ENCODE measurements at regions of chr2 and their contacts with region 1.

Region 1: GRCh38 chr2:205772983-205773382 is 90.7 kb downstream of the NRP2 start:
- DNase-seq: no peak
- CTCF ChIP-seq: no peak

Region 2: GRCh38 chr2:205130111-205130829 is 642.7 kb before region 1 on chr2:
- in situ Hi-C with region 1: no loop called
- DNase-seq: no peak
- CTCF ChIP-seq: no peak

Region 3: GRCh38 chr2:205883965-205884364 is 111.0 kb after region 1 on chr2:
- in situ Hi-C with region 1: loop called (anchors 5 kb)
- DNase-seq: no peak
- CTCF ChIP-seq: no peak

Region 4: GRCh38 chr2:206143451-206143850 is 370.5 kb after region 1 on chr2:
- in situ Hi-C with region 1: no loop called
- DNase-seq: no peak
- CTCF ChIP-seq: no peak

Region 5: DNA sequence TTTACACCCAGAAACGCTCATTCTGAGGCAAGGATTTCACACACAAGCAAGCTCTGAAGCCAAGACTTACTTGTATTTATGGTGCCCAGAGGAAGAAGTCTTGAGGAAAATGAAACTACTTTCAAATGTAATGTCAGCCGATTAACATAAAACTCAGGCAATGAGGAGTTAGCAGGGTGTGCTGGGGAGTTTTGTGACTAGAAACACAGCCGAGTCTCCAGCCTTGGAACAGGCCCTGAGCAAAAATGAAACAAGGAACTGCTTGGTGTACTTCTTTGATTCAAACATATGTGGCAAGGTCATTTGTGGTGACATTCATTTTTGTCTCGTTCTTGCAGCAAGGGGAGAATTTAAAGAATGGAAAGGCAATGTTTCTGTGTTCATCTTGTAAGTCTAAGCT is 940.8 kb after region 1 on chr2:
- in situ Hi-C with region 1: no loop called
- DNase-seq: peak; percentile 33
- CTCF ChIP-seq: no peak

Measured in GM13976 (cell line).